IMR-90 (cell line): ENCODE measurements at regions of chr10 and their contacts with region 1.

Region 1: DNA sequence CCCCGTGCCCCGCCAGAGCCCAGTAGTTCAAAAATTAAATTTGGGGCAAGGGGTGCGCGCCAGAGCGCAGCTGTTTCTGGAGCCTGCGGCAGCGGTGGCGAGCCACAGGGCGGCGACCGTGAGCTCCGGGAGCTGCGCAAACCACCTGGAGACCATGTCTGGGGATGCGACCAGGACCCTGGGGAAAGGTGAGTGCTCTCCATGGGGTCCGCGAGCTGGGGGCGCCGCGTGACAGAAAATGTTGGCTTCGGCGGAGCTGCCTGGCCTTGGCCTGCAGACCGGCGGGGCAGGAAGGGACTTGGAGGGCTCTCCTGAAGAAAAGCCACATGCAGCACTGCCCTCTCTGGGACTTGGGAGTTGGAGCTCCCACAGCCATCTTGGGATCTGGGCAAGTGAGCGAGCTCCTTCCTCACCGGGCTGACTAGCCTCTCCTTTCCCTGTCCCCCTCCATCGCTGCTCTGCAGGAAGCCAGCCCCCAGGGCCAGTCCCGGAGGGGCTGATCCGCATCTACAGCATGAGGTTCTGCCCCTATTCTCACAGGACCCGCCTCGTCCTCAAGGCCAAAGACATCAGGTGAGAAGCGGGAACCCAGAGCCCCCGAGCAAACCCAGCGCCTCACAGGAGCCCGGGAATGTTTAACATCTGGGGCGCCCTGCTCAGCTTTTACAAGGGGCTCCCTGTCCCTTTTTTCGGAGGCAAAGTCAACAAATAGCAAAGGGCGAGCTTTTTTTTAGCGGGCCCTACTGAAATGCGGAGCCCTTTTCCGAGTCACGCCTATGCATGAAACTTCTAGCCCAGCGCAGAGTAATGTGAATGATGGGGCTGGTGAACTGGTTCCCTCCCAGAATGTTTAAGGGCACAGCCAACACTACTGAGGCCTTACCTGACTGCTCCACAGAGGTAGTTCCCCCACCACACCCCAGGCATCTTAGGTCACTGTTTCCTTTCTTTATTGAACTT is 6.1 kb downstream of the GSTO2 start:
- DNase-seq: no peak
- ATAC-seq: peak; percentile 84
- H3K4me3 ChIP-seq: peak overlapping the region; percentile 29
- H3K27ac ChIP-seq: no peak overlapping the region
- H3K4me1 ChIP-seq: peaks cover 13% of the 10 kb centered on the region
- H3K27me3 ChIP-seq: no peaks in the 10 kb centered on the region
- CTCF ChIP-seq: peak; percentile 64
- POLR2A ChIP-seq: no peak
- RAD21 ChIP-seq: peak; percentile 49

Region 2: DNA sequence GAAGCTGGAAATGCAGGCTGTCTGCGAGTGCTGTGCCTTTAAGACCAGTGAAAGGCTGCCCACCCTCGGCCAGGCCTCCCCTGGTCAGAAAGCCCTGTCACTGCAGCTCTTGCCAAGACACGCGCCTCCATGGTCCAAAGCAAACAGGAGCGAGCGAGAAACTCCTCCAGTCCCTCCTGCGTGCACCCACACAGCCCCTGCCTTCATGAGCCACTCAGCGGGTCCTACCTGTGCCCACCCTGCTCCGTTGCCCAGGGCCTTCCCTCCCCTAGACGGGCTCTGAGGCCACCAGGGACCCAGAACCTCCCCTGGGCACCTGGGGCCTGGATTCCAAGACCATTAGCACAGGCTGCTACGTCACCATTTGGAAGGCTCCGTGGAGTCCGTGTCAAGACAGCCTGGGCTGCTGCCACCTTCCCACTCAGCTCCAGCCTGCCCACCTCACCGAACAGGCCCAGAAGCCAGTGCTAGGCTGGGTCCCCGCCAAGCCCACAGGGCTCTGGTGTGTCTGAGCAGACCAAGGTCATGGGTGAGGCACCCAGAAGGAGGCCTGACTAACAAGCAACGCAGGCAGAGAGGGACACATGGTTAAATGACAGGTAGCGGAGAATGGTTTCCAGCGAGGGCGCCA is 637.0 kb before region 1 on chr10:
- CTCF ChIA-PET with region 1: no interaction called
- POLR2A ChIA-PET with region 1: no interaction called
- dilution Hi-C with region 1: no loop called
- in situ Hi-C with region 1: no loop called
- intact Hi-C with region 1: no loop called
- DNase-seq: peak; percentile 92
- ATAC-seq: peak; percentile 69
- H3K4me3 ChIP-seq: no peak overlapping the region
- H3K27ac ChIP-seq: peak overlapping the region; percentile 40
- H3K4me1 ChIP-seq: peaks cover 23% of the 10 kb centered on the region
- H3K27me3 ChIP-seq: no peaks in the 10 kb centered on the region
- CTCF ChIP-seq: no peak
- POLR2A ChIP-seq: no peak
- RAD21 ChIP-seq: no peak

Region 3: DNA sequence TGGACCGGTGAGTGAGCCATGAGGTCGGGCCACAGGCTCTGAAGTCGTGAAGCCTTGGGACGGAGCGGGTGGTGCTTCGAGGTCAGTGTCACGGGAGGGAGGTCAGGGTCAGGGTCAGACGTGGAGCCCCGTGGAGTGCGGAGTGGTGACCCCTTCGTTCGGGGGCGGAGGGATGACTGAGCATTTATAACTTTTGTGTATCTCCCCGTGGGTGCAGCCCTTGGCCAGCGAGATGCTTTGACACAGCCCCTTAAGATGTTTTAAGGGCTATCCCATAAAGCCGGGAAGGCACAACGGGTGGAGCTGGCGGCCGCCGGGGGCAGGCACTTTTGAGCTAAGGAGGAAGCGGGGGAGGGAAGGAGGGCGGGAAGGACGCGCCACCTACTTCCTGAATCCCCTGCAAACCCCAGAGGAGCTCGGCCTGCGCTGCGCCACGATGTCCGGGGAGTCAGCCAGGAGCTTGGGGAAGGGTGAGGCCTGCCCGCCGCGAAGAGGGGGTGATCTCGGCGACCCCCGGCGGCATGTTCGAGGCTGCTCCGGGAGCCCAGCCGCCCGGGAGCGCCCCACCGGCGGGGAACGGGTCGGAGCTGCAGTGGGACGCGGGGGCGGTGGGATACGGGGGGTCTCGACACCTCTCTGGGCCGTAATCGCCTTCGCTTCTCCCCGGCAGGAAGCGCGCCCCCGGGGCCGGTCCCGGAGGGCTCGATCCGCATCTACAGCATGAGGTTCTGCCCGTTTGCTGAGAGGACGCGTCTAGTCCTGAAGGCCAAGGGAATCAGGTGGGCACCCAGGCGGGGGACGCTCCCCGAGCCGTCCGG is 20.3 kb before region 1 on chr10 and contains the start of gene GSTO1:
- CTCF ChIA-PET with region 1: interaction called, 11 read pairs
- POLR2A ChIA-PET with region 1: no interaction called
- dilution Hi-C with region 1: no loop called
- in situ Hi-C with region 1: no loop called
- intact Hi-C with region 1: no loop called
- DNase-seq: peak; percentile 76
- ATAC-seq: peak; percentile 89
- H3K4me3 ChIP-seq: peak within 1 kb of the TSS; percentile 96
- H3K27ac ChIP-seq: peak within 1 kb of the TSS; percentile 96
- H3K4me1 ChIP-seq: peaks cover 8% of the 10 kb centered on the region
- H3K27me3 ChIP-seq: no peaks in the 10 kb centered on the region
- CTCF ChIP-seq: no peak
- POLR2A ChIP-seq: peak; percentile 76
- RAD21 ChIP-seq: no peak
- total RNA-seq, gene GSTO1: 258 and 330 TPM in 2 replicates

Region 4: GRCh38 chr10:104309976-104310674 is 35.1 kb after region 1 on chr10:
- CTCF ChIA-PET with region 1: no interaction called
- POLR2A ChIA-PET with region 1: no interaction called
- dilution Hi-C with region 1: no loop called
- in situ Hi-C with region 1: no loop called
- intact Hi-C with region 1: no loop called
- DNase-seq: peak; percentile 90
- ATAC-seq: peak; percentile 69
- H3K4me3 ChIP-seq: no peak overlapping the region
- H3K27ac ChIP-seq: peak overlapping the region; percentile 50
- H3K4me1 ChIP-seq: peaks cover 21% of the 10 kb centered on the region
- H3K27me3 ChIP-seq: no peaks in the 10 kb centered on the region
- CTCF ChIP-seq: no peak
- POLR2A ChIP-seq: no peak; the same call in 1 of the 2 replicates
- RAD21 ChIP-seq: no peak

Region 5: DNA sequence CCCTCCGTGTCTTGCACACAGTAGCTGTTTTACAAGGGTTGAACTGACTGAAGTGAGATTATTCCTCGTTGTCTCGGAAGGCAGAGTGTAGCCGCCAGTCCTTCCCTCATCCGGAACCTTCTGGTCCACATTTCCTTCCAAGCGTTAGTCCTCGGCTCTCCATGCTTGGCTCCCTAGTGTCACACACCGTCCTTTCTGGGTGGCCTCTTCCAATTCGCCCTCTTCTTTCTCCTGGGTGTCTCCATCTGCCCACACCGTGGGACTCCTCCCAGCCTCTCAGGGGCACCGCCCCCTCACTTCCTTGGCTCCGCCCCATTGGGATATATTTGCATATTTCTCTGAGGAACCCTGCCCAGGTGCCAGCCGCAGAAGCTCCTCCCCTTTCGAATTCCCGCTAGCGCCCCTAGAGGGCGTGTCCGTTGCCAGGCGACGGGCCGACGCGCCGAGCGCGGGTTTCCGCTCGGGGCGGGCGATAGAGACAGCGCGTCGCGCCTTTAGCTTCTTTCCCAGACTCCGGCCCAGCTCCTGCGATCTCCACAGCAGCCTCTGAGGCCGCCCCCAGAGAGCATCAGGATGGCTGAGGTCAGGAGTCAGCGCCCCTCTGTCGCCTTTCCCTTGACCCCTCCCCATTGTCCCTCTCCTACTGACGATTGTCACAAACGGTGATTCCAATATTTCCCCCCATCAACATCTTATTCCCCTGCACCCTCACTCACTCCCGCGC is 78.4 kb after region 1 on chr10 and contains the start of gene CFAP58:
- CTCF ChIA-PET with region 1: interaction called, 6 read pairs
- POLR2A ChIA-PET with region 1: no interaction called
- dilution Hi-C with region 1: no loop called
- in situ Hi-C with region 1: no loop called
- intact Hi-C with region 1: loop called (anchors 1 kb)
- DNase-seq: peak; percentile 70
- ATAC-seq: peak; percentile 87
- H3K4me3 ChIP-seq: peak within 1 kb of the TSS; percentile 53
- H3K27ac ChIP-seq: no peak within 1 kb of the TSS; the same call in 1 of the 2 replicates
- H3K4me1 ChIP-seq: peaks cover 7% of the 10 kb centered on the region; the same call in 1 of the 2 replicates
- H3K27me3 ChIP-seq: peaks cover 3% of the 10 kb centered on the region; the same call in 1 of the 2 replicates
- CTCF ChIP-seq: peak; percentile 67
- POLR2A ChIP-seq: no peak
- RAD21 ChIP-seq: no peak
- total RNA-seq, gene CFAP58: 0.36 and 0.83 TPM in 2 replicates